ENCODE measurements at regions of chr12 and their contacts with region 1.

Region 1: DNA sequence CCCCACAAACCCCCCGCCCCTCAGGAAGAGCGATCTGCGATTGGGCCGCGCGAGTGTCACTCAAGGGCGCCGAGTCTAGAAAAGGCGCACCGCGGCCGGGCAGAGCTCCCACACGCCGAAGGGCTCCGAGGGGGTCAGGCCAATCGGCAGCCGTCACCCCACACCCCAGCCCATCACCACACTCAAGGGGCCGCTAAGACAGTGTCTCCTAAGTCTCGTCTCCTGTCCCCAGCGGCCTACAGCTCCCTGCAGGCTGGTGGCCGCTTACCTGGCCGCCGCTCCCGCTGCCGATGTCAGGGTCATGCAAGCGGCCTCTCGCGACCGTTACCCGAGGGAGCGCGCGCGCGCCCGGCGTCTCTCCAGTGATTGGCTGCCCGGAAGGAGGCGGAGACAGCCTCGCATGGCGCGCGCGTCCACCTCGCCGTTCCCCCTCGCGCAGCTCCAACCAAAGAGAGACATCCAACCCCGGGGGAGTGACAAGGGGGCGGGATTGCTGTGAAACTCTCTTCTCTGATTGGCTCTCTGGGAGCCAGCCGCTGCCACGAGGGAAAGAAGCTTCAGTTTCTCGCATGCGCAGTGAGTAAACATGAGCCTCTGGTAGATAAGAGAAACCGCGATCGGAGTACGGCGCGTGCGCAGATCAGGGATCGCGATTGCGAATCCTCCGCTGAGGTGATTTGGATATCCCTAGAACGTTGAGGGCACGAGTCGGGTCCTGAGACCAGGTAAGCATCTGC is at the starts of genes MPHOSPH9 and MTRFR:
- DNase-seq: peak; percentile 99
- ATAC-seq: peak; percentile 99
- total RNA-seq, gene MPHOSPH9: 23.4 to 27.9 TPM
- total RNA-seq, gene MTRFR: 8.1 to 10.9 TPM

Region 2: GRCh38 chr12:122413516-122414404 is 819.2 kb before region 1 on chr12:
- intact Hi-C with region 1: no loop called
- DNase-seq: no peak
- ATAC-seq: peak in 1 of 2 donors; percentile 35

Region 3: GRCh38 chr12:122974892-122975789 is 257.8 kb before region 1 on chr12 and contains the start of gene OGFOD2:
- intact Hi-C with region 1: loop called in 1 of 2 experiments (anchors 5 kb)
- DNase-seq: peak; percentile 94
- ATAC-seq: peak; percentile 94 to 95
- total RNA-seq, gene OGFOD2: 10.5 to 14.1 TPM

Region 4: GRCh38 chr12:123043536-123044001 is 189.4 kb before region 1 on chr12:
- intact Hi-C with region 1: loop called (anchors 5 to 10 kb)
- DNase-seq: peak; percentile 85
- ATAC-seq: peak; percentile 91 to 93

Region 5: DNA sequence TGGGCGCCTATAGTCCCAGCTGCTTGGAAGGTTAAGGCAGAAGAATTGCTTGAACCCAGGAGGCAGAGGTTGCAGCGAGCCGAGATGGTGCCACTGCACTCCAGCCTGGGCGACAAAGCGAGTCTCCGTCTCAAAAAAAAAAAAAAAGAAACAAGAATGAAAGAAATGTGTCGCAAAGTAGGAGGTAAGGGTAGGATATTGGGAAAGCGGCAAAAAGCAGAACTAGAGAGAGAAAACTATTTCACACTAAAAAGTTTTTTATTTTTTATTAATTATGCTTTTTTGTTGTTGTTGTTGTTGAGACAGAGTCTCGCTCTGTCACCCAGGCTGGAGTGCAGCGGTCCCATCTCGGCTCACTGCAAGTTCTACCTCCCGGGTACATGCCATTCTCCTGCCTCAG is 114.0 kb after region 1 on chr12:
- intact Hi-C with region 1: no loop called
- DNase-seq: no peak
- ATAC-seq: no peak